ENCODE measurements at regions of chr11 and their contacts with region 1.

Region 1: DNA sequence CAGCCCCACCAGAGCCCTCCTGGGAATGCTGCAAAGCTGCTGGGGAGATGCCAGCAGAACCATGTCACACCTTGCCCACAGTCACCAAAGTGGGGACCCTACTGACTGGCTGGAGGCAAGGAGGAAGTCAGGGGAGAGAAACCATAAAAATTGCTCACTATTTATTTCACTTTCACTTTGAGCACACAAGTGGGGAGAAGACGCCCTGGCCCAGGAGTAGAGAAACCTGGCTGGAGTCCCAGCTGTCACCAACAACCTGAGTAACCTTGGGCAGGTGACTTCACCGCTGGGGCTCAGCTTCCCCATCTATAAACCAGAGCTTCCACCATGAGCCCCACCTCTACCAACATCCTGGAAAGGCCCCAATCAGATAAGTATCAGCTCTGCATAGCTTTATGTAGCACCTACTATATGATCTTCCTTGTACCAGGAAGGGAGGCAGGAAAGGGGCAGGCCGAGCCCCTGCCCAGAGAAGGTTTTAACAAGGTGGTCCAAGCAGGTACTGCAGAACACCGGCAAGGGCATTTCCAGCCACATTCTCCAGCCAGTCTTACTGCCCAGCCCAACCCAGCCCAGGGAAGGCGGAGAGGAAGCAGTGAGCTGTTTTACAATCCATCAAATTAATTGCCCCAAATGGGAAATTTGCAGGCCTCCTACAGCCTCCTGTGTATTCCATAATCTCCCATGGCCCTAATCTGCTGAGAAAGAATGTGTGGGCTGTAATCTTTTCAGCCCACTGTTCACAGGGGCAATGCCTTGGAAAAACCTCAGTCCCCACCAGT is 27.6 kb downstream of the PLEKHA7 start:
- DNase-seq: peak; percentile 81 to 88
- H3K4me3 ChIP-seq: peak overlapping the region; percentile 28; the same call in 1 of the 2 replicates
- H3K27ac ChIP-seq: peak overlapping the region; percentile 76
- H3K4me1 ChIP-seq: peaks cover 83% of the 10 kb centered on the region
- H3K27me3 ChIP-seq: no peaks in the 10 kb centered on the region
- CTCF ChIP-seq: no peak

Region 2: DNA sequence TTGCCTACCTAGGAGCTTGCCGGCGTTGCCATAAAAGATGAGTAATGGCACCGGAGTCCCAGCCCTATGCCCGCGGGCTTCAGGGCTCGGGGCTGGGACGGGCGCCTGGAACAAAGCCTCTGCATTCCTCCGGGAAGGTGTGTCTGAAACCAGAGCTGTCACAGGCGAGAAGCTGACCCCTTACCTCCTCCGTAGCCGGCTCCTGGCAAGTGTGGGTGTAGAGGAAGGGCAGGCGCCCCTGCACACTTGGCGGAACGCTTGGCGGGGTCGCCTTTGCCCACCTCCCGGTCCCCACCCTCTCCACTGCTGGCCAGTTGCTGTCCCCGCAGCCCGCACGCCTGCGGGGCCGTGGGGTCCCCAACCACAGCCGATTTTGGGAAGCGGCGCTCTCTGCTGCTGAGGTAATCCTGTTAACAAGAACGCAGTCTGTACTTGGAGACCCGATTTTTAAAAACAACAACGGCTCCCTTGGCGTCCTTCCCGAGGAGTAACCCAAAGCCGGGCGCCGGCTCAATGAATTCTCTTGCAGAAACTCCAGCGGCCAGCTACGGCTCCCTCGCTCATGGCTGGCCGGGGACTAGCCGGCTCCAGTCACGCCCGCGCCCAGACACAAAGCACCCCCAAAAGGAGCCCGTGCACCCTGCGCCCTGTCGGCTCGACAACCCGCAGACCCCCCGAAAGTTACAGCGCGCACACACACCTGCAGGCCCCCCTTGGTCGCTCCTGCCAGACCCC is 61.6 kb before region 1 on chr11:
- CTCF ChIA-PET with region 1: no interaction called
- POLR2A ChIA-PET with region 1: no interaction called
- intact Hi-C with region 1: loop called (anchors 1 kb)
- DNase-seq: peak; percentile 86 to 87
- H3K4me3 ChIP-seq: peak overlapping the region; percentile 61
- H3K27ac ChIP-seq: peak overlapping the region; percentile 91
- H3K4me1 ChIP-seq: peaks cover 62% of the 10 kb centered on the region
- H3K27me3 ChIP-seq: no peaks in the 10 kb centered on the region
- CTCF ChIP-seq: no peak

Region 3: DNA sequence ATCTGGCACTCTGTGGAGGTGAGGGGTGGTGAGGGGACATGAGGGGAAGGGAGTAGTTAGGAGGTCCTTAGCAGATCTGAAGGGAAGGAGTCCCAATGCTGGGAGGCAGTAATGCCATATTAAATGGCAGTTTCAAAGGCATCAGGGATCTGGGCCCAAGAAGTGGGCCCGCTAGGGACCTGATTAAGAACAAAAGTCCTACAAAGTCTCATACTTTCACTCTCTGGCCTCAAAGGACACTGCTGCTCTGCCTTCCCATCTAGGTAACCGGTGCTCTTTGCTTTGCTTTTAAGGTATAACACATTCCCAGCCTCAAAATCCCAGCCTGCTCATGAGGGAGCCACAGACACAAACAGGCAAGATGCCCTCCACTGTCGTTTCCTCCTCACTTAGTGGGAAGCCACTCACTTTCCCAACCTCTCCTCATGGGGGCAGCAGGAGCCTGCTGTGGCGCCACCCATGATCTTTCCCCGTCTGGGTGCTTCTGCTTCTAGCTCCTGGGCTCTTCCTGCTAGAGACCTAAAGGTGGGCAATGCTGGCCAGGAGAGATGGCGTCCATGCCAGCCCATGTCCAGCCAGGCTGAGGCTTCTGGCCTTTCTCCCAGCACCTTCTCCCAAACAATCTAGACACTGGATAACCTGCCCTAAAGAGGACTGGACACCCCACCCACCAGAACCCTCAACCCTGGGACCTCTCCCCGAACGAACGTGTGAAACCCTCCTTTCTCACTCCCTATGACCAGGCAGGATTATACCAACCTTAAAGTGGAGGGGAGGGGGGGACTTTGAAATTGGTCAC is 40.8 kb before region 1 on chr11:
- CTCF ChIA-PET with region 1: interaction called, 4 read pairs
- POLR2A ChIA-PET with region 1: no interaction called
- intact Hi-C with region 1: loop called (anchors 2 kb)
- DNase-seq: peak; percentile 58 to 73
- H3K4me3 ChIP-seq: no peak overlapping the region
- H3K27ac ChIP-seq: no peak overlapping the region; the same call in 1 of the 2 replicates
- H3K4me1 ChIP-seq: peaks cover 15% of the 10 kb centered on the region
- H3K27me3 ChIP-seq: no peaks in the 10 kb centered on the region
- CTCF ChIP-seq: peak; percentile 84

Region 4: DNA sequence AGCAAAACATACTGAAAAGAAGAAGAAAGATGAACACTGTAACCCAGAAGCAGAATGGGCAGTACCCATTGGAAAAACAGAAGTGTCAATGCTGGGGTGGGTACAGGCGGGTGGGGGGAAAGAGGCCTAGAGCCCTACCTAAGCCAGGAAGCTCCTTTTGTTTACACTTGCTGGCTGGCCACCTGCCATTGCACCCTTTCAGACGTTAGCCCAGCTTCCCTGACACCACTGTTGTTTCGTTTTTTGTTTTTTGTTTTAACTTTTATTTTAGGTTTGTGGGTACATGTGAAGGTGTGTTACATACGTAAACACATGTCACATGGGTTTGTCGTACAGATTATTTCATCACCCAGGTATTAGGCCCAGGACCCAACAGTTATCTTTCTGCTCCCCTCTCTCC is 27.8 kb before region 1 on chr11:
- CTCF ChIA-PET with region 1: no interaction called
- POLR2A ChIA-PET with region 1: no interaction called
- intact Hi-C with region 1: loop called (anchors 1 kb)
- DNase-seq: no peak
- H3K4me3 ChIP-seq: no peak overlapping the region
- H3K27ac ChIP-seq: no peak overlapping the region
- H3K4me1 ChIP-seq: peaks cover 82% of the 10 kb centered on the region
- H3K27me3 ChIP-seq: no peaks in the 10 kb centered on the region
- CTCF ChIP-seq: no peak

Region 5: DNA sequence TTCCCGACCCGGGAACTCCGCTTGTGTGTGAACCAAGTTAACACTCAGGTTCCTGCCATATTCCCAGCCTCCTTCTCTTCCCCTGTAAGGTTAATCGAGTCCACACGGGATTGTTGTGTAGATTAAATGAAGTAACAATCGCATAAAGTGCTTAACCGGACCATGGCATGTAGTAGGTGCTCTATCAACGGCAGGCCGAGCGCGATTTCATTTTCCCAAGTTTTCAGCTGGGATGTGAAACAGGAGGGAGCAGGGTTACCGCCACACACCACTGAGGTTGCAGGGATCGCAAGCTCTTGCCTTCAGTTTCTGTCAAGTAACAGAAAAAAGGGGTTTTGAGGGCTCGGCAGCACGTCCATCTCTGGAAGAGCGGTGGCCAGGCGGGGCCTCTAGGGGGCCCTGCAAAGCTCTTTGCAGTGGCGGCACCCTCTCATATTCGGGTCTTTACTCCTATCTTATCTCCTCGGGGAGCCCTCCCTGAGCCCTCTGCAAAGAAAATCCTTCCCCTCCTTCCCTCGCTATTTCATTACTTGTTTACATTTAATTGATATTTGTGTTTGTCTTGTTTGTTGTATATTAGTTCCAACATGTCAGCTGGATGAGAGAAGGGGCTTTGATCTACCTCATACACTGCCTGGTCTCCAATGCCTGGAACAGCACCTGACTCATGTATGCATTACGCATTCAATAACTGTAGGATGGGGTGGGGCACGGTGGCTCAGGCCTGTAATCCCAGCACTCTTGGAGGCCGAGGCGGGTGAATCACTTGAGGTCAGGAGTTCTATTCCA is 28.4 kb after region 1 on chr11:
- CTCF ChIA-PET with region 1: interaction called, 4 read pairs
- POLR2A ChIA-PET with region 1: interaction called, 5 read pairs
- intact Hi-C with region 1: loop called (anchors 1 kb)
- DNase-seq: peak; percentile 57 to 88
- H3K4me3 ChIP-seq: peak overlapping the region; percentile 89
- H3K27ac ChIP-seq: peak overlapping the region; percentile 70
- H3K4me1 ChIP-seq: peaks cover 60% of the 10 kb centered on the region
- H3K27me3 ChIP-seq: no peaks in the 10 kb centered on the region
- CTCF ChIP-seq: peak; percentile 71

Region 6: DNA sequence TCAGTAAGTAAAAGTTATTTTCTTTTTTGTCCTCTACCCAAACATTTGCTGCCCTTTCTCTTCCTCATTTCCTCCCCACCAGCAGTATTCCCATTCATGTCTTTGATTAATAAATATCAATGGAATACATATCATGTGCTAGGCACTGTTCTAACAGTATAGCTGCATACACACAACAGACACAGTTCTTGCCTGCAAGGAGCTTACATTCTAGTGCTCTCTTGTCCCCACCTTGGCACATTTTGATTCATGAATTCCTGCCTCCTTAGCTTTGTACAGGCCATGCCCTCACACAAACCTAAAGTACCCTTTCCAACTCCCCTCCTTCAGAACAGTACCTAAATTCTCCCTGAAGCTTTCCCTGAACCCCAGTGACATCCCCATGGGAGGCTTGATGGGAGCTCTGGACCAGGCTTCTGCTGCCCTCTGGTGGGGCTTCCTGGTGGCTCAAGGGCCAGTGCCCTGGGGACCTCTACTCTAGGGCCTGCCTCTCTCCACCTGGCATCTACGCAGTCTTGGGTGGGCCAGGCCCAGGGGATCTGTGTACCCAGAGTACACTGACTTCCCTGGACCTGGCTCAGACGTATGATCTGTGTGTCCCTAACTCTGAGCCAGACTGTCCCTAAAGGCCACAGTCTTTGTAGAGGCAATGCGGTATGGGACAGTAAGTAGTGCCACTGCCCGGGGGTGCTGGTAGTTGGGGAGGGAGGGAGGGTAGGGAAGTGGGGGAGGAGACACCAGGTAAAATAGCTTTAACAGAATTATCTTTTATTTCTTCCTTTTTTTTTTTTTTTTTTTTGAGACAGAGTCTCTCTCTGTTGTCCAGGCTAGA is 76.8 kb after region 1 on chr11:
- CTCF ChIA-PET with region 1: no interaction called
- POLR2A ChIA-PET with region 1: interaction called, 6 read pairs
- intact Hi-C with region 1: loop called (anchors 1 kb)
- DNase-seq: peak in 1 of 2 experiments; percentile 59
- H3K4me3 ChIP-seq: no peak overlapping the region
- H3K27ac ChIP-seq: no peak overlapping the region
- H3K4me1 ChIP-seq: no peaks in the 10 kb centered on the region
- H3K27me3 ChIP-seq: no peaks in the 10 kb centered on the region
- CTCF ChIP-seq: peak; percentile 86

Region 7: GRCh38 chr11:17207317-17208258 is 221.0 kb after region 1 on chr11 and contains the start of gene PIK3C2A:
- CTCF ChIA-PET with region 1: no interaction called
- POLR2A ChIA-PET with region 1: interaction called, 4 read pairs
- intact Hi-C with region 1: loop called (anchors 10 kb)
- DNase-seq: peak; percentile 90 to 95
- H3K4me3 ChIP-seq: peak within 1 kb of the TSS; percentile 72
- H3K27ac ChIP-seq: peak within 1 kb of the TSS; percentile 95
- H3K4me1 ChIP-seq: peaks cover 26% of the 10 kb centered on the region
- H3K27me3 ChIP-seq: no peaks in the 10 kb centered on the region
- CTCF ChIP-seq: no peak
- total RNA-seq, gene PIK3C2A: 53.8 and 70.7 TPM in 2 replicates